Activated B cell treated with CpG ODN at 0.5 μM for 24 hours (primary cell): ENCODE measurements at regions of chr19 and their contacts with region 1.

Region 1: DNA sequence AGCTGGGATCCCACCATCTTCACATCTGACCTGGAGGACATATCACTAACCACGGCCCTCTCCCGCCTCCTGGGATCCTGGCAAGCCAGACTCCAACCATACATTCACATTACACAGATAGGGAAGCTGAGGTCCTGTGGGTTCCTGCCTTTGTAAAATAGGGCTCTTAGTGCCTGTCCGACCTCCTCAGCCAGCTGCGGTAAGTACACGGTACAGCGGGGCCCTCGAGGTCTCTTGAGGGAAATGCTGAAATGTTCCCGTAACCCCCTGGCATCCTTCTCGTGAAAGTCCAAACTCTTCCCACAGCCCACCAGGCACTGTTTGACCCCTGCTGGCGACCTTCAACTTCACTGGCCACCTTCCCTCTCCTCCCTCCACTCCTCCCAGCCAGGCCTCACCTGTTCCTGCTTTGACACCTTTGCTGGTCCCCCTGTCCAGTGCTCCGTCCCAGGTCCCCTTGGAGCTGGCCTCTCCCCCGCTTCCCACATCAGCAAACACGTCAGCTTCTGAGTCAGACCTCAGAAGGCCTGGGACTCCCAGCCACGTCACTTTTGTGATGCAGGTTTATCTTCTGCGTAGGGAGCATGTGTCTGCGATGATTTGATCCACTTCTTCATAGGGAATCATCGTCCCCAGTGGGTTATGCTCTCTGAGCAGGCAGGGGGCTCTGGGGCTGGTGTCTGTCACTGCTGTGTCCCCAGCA is 8.8 kb upstream of the GNG7 start:
- DNase-seq: no peak
- ATAC-seq: peak; percentile 5
- H3K4me3 Mint-ChIP-seq: peak overlapping the region; percentile 66
- H3K27ac Mint-ChIP-seq: peak overlapping the region; percentile 87
- H3K4me1 Mint-ChIP-seq: peaks cover 39% of the 10 kb centered on the region
- H3K27me3 Mint-ChIP-seq: no peaks in the 10 kb centered on the region
- CTCF ChIP-seq: no peak

Region 2: DNA sequence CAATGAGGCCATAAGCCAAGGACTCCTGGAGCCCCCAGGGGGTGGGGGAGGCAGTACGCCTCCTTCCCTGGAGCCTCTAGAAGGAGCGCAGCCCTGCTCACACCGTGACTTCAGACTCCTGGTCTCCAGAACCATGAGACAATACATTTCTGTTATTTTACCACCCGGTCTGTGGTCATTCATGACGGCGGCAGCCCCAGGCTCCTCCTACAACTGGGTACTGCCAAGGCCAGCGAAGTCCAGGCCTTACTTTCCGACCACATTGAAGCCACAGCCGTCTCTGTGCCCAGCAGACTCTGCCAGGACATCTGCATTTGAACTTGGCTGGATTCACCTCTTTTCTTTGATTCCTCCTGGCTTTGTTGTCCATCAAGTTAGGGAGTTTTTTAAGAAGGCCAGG is 19.4 kb before region 1 on chr19:
- CTCF ChIA-PET with region 1: interaction called, 3 read pairs
- POLR2A ChIA-PET with region 1: interaction called, 14 read pairs
- intact Hi-C with region 1: loop called (anchors 2 kb)
- DNase-seq: no peak
- ATAC-seq: no peak
- H3K4me3 Mint-ChIP-seq: no peak overlapping the region
- H3K27ac Mint-ChIP-seq: peak overlapping the region; percentile 46
- H3K4me1 Mint-ChIP-seq: peaks cover 57% of the 10 kb centered on the region
- H3K27me3 Mint-ChIP-seq: no peaks in the 10 kb centered on the region
- CTCF ChIP-seq: no peak

Region 3: DNA sequence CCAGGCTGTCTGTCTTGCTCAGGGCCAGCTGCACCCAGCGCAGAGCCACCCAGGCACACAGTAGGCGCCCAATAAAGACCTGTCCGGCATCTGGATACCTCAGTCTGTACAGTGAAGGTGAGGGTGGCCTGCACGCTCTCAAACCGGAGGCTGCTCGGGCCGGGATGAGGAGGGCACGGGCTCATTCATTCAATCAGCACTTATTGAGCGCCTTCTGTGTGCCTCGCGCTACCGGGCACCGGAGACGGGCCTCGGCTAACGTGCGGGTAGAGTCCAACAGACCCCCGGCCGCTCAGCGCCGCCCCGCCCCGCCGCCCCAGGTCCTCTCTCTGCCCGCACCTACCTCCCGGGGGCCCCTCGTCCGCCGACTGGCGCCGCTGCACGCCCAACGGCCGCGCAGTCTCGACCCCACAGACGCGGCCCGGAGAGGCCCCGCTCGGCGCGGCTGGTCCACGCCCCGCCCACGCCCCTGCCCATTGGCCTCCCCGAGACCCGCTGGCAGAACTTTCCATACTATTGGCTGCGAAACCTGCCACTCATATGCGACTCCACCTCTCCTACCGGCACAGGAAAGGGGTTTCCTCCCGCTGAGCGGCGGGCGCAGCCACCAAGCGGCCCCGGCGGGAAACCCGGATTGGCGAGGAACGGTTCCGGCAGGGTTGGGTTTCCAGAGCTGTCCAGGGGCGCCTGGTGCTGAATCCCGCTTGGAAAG is 28.4 kb after region 1 on chr19 and contains the start of gene SLC39A3:
- CTCF ChIA-PET with region 1: no interaction called
- POLR2A ChIA-PET with region 1: interaction called, 11 read pairs
- intact Hi-C with region 1: no loop called
- DNase-seq: peak; percentile 94
- ATAC-seq: peak; percentile 100
- H3K4me3 Mint-ChIP-seq: peak within 1 kb of the TSS; percentile 88
- H3K27ac Mint-ChIP-seq: peak within 1 kb of the TSS; percentile 65
- H3K4me1 Mint-ChIP-seq: peaks cover 28% of the 10 kb centered on the region
- H3K27me3 Mint-ChIP-seq: peaks cover 3% of the 10 kb centered on the region
- CTCF ChIP-seq: no peak
- total RNA-seq, gene SLC39A3: 33.8 and 34.3 TPM in 2 replicates

Region 4: DNA sequence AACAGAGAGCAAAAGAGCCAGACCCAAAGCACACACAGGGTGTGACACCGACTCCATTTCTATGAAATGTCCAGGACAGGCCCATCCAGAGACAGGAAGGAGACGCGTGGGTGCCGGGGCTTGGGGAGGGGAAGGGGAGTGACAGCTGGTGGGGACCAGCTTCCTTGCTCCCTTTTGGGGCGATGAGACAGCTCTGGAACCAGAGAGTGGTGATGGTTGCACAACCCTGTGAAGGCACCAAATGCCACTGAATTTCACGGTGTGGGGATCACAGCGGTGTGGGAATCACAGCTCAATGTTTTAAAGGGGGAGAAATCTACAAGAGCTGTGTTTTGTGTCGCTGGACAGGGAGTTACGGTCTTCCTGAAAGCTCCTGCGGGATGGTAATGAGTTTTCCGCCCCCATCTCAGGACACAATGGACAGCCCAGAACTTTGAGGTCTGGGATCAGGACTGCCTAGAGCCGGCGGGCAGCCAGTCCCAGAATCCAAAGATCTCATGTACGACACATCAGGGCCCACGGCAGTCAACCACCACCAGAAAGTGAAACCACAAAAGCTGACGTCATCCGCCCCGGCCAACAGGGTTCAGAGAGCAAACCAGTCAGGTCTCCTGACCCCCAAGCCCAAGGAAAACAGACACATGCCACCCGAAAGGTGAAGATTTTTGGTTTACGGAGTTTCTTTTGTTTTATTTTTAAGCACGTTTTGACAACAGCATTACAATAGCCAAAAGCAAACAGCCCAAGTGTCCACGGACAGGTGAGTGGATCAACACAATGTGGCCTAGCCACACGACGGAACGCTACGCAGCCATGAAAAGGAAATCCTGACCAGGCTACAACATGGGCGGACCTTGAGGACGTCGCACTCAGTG is 64.5 kb after region 1 on chr19:
- CTCF ChIA-PET with region 1: no interaction called
- POLR2A ChIA-PET with region 1: no interaction called
- intact Hi-C with region 1: no loop called
- DNase-seq: peak; percentile 40
- ATAC-seq: peak; percentile 64
- H3K4me3 Mint-ChIP-seq: peak overlapping the region; percentile 76
- H3K27ac Mint-ChIP-seq: peak overlapping the region; percentile 88
- H3K4me1 Mint-ChIP-seq: peaks cover 47% of the 10 kb centered on the region
- H3K27me3 Mint-ChIP-seq: no peaks in the 10 kb centered on the region
- CTCF ChIP-seq: no peak